PC-3 (cell line): ENCODE measurements at regions of chr11 and their contacts with region 1.

Region 1: DNA sequence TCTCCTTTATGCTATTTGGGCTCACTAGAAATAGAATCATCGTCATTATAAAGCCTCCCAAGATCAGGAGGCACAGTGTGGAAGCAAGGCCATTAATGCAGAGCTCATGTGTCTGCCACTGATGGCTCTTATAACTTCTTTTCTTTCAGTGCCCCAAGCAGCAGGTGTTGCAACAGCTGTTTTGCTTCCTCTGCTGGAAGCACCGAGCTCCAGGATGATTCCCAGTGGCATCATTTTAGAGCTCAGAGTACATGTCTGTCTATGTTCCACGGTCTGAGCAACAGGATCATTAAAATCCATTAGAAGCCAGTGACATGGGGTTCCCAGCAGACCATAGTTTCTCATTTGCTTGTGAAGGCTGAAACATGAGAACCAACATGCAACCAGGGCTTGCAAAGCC is 803.0 kb upstream of the FAT3 start:
- DNase-seq: no peak
- ATAC-seq: no peak
- H3K4me3 ChIP-seq: no peak overlapping the region
- H3K27ac ChIP-seq: no peak overlapping the region
- H3K4me1 ChIP-seq: no peaks in the 10 kb centered on the region
- H3K27me3 ChIP-seq: no peaks in the 10 kb centered on the region
- CTCF ChIP-seq: no peak

Region 2: GRCh38 chr11:91264481-91264880 is 157.2 kb before region 1 on chr11:
- CTCF ChIA-PET with region 1: no interaction called
- POLR2A ChIA-PET with region 1: interaction called, 12 read pairs
- intact Hi-C with region 1: no loop called
- DNase-seq: no peak
- ATAC-seq: no peak
- H3K4me3 ChIP-seq: no peak overlapping the region
- H3K27ac ChIP-seq: no peak overlapping the region
- H3K4me1 ChIP-seq: no peaks in the 10 kb centered on the region
- H3K27me3 ChIP-seq: no peaks in the 10 kb centered on the region
- CTCF ChIP-seq: no peak

Region 3: GRCh38 chr11:91446267-91446666 is 24.6 kb after region 1 on chr11:
- CTCF ChIA-PET with region 1: no interaction called
- POLR2A ChIA-PET with region 1: no interaction called
- intact Hi-C with region 1: no loop called
- DNase-seq: no peak
- ATAC-seq: no peak
- H3K4me3 ChIP-seq: no peak overlapping the region
- H3K27ac ChIP-seq: no peak overlapping the region
- H3K4me1 ChIP-seq: no peaks in the 10 kb centered on the region
- H3K27me3 ChIP-seq: no peaks in the 10 kb centered on the region
- CTCF ChIP-seq: no peak